ENCODE measurements at regions of chr10 and their contacts with region 1.

Region 1: DNA sequence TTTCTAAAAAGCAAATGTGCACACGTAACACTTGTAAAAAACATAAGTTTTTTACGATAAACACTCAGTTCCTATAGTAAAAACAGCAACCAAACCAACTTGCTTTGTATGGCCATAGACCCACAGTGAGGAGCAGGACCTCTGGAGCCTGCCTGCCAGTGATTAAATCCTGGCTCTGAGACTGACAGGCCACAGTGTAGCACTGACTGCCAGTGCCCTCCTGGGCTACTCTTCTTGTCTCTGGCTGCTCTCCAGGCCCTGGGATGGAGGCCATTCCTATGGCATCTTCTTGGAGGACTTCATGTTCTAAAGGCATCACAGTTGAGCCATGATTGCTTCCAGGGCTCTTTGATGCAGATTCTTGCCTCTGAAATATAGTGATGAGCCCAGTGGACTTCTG is 22.7 kb upstream of the TMEM254 start:
- DNase-seq: no peak
- H3K4me3 Mint-ChIP-seq: no peak overlapping the region
- H3K27ac Mint-ChIP-seq: no peak overlapping the region
- H3K4me1 Mint-ChIP-seq: peaks cover 3% of the 10 kb centered on the region
- H3K27me3 Mint-ChIP-seq: peaks cover 2% of the 10 kb centered on the region

Region 2: GRCh38 chr10:80132299-80133139 is 76.8 kb after region 1 on chr10 and contains the start of gene PLAC9:
- intact Hi-C with region 1: loop called (anchors 5 kb)
- DNase-seq: no peak
- H3K4me3 Mint-ChIP-seq: no peak within 1 kb of the TSS
- H3K27ac Mint-ChIP-seq: no peak within 1 kb of the TSS
- H3K4me1 Mint-ChIP-seq: peaks cover 3% of the 10 kb centered on the region
- H3K27me3 Mint-ChIP-seq: peaks cover 35% of the 10 kb centered on the region
- total RNA-seq, gene PLAC9: not detected in 2 replicates